ENCODE measurements at regions of chr12 and their contacts with region 1.

Region 1: DNA sequence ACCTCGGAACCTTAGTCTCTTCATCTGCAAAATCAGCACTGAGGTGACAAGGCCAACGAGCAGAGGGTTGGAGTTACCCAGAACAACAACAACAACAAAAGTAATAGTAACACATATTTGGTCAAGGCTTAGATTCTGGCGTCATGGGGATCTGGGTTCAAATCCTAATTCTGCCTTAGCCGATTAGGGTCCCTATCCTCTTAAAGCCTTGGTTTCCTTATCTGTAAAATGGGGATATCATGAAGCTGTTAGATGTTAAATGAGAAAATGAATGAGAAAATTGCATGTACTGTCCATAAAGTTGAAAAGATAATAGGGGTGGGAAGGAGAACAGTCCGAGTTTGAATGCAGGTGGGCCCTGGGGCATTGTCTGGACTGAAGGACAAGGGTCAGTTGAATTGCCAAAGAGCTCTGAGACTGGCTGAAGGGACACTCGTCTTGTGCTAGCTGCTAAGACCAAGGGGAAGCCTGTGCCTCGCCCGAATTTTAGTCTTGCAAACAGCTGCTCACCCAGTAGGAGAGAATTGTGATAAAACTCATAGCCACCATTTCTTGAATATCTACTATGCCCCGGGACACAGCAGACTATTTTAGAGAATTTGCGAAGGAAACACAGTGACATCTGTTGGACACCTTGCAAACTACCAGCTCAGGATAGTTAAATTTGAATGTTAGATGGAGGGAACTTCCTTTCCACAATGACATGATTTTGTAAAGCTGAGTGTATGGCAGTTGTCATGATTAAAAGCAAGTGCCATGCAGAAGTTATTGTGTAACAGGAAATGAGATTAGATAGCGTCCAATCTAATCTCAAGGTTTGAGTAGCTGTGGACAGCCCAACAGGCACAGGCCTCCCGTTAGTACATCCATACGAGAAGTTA is 6.8 kb upstream of the HNF1A start:
- DNase-seq: peak; percentile 43 to 72 (median 59)
- ATAC-seq: peak; percentile 92
- H3K4me3 ChIP-seq: no peak overlapping the region
- H3K27ac ChIP-seq: no peak overlapping the region
- H3K4me1 ChIP-seq: peaks cover 0 to 2% of the 10 kb centered on the region in 2 experiments; a peak in 1 of 5 replicates
- H3K27me3 ChIP-seq: no peaks in the 10 kb centered on the region
- CTCF ChIP-seq: peak; percentile 69 to 94 (median 85)
- EP300 ChIP-seq: no peak
- POLR2A ChIP-seq: no peak
- RAD21 ChIP-seq: peak; percentile 81 to 94

Region 2: DNA sequence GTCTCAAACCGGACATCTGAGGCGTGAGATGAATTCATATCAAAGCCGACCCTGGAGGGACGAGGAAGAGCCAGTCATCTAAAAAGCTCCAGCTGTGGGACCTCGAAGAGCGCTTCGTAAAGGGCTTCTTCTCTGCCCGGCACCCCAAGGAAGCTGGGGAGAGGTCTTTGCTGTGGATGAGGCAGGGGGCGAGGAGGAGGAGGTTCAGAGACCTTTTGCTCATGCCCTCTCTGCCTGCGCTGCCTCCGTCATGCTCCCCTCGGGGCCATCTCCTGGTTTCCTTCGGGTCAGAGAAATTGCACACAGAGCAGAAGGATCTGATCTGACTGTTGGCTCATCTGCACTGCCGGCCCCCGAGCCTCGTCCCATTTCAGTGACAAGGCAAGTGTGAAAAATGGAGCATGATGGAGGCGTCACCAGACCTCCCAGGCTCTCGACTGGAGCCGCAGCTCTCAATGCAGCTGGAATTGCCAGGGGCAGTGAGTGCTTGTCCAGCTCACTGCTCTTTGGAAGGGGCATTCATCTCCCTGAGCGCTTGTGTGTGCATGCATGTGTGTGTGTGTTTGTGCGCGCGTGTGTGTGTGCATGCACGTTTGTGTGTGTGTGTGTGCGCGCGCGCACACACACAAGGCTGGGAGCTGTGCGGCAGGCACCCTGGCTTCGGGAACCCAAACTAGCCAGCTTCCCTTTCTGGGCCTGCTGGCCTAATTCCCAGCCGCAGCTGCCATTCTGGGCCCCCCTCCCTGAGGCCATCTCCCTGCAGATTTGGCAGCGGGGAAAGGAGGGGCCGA is 321.9 kb before region 1 on chr12:
- CTCF ChIA-PET with region 1: interaction called, 9 read pairs
- POLR2A ChIA-PET with region 1: interaction called, 3 read pairs
- in situ Hi-C with region 1: no loop called
- intact Hi-C with region 1: loop called (anchors 5 kb)
- DNase-seq: no peak
- ATAC-seq: 0 out of 3 replicates have a peak, but pooled peaks have one; percentile 10
- H3K4me3 ChIP-seq: no peak overlapping the region
- H3K27ac ChIP-seq: no peak overlapping the region
- H3K4me1 ChIP-seq: peaks cover 3 to 6% of the 10 kb centered on the region in 2 experiments; a peak in 2 of 5 replicates
- H3K27me3 ChIP-seq: peaks cover 29 to 54% of the 10 kb centered on the region in 2 experiments
- CTCF ChIP-seq: peak in 1 of 3 experiments; percentile 9; a peak in 1 of 6 replicates
- EP300 ChIP-seq: no peak
- POLR2A ChIP-seq: no peak
- RAD21 ChIP-seq: no peak

Region 3: DNA sequence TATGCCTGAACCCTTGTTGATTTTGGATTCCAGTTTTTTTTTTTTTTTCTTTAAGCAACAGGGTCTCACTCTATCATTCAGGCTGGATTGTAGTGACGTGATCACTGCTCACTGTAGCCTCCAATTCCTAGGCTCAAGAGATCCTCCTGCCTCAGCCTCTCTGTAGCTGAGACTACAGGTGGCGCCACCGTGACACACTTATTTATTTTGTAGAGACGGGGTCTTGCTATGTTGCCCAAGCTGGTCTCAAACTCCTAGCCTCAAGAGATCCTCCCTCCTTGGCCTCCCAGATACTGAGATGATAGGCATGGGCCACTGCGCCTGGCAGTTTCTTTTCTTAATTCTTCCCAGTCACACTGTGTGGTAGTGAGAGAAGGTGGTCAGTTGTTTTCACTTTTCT is 220.7 kb before region 1 on chr12:
- CTCF ChIA-PET with region 1: no interaction called
- POLR2A ChIA-PET with region 1: no interaction called
- in situ Hi-C with region 1: no loop called
- intact Hi-C with region 1: loop called (anchors 2 kb)
- DNase-seq: peak in 1 of 4 experiments; percentile 17
- ATAC-seq: no peak
- H3K4me3 ChIP-seq: no peak overlapping the region
- H3K27ac ChIP-seq: no peak overlapping the region
- H3K4me1 ChIP-seq: peaks cover 3 to 5% of the 10 kb centered on the region in 2 experiments; a peak in 2 of 5 replicates
- H3K27me3 ChIP-seq: no peaks in the 10 kb centered on the region
- CTCF ChIP-seq: peak in 1 of 3 experiments; percentile 21; a peak in 2 of 6 replicates
- EP300 ChIP-seq: no peak
- POLR2A ChIP-seq: no peak
- RAD21 ChIP-seq: peak in 1 of 2 experiments; percentile 39; a peak in 2 of 4 replicates

Region 4: DNA sequence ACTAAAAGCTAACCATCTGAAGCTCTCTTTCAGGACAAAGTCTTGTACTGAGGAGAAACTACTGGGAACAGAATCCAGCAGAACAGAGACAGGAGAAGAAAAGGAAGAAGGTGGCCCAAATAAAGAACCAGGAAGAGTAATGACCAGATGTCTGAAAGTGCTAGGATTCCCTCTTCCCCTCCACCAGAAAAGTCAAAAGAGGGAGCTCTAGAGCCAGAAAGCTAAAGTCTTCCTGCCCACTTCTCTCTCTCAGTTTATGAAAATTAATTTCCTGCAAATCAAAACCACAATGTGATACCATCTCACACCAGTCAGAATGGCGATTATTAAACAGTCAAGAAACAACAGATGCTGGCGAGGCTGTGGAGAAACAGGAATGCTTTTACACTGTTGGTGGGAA is 114.6 kb before region 1 on chr12:
- CTCF ChIA-PET with region 1: interaction called, 4 read pairs
- POLR2A ChIA-PET with region 1: no interaction called
- in situ Hi-C with region 1: no loop called
- intact Hi-C with region 1: loop called (anchors 2 kb)
- DNase-seq: peak in 1 of 4 experiments; percentile 23
- ATAC-seq: peak; percentile 70
- H3K4me3 ChIP-seq: no peak overlapping the region
- H3K27ac ChIP-seq: no peak overlapping the region
- H3K4me1 ChIP-seq: peaks cover 4 to 11% of the 10 kb centered on the region in 2 experiments; a peak in 2 of 5 replicates
- H3K27me3 ChIP-seq: no peaks in the 10 kb centered on the region
- CTCF ChIP-seq: peak; percentile 23 to 61 (median 35); a peak in 3 of 6 replicates
- EP300 ChIP-seq: no peak
- POLR2A ChIP-seq: no peak
- RAD21 ChIP-seq: peak in 1 of 2 experiments; percentile 62; a peak in 2 of 4 replicates

Region 5: GRCh38 chr12:120904197-120904773 is 67.3 kb before region 1 on chr12 and contains the start of gene SPPL3:
- CTCF ChIA-PET with region 1: no interaction called
- POLR2A ChIA-PET with region 1: no interaction called
- in situ Hi-C with region 1: no loop called
- intact Hi-C with region 1: loop called (anchors 1 kb)
- DNase-seq: peak; percentile 94 to 95 (median 95)
- ATAC-seq: peak; percentile 91
- H3K4me3 ChIP-seq: peak within 1 kb of the TSS; percentile 98
- H3K27ac ChIP-seq: peak within 1 kb of the TSS; percentile 84
- H3K4me1 ChIP-seq: peaks cover 13 to 21% of the 10 kb centered on the region in 2 experiments; a peak in 4 of 5 replicates
- H3K27me3 ChIP-seq: no peaks in the 10 kb centered on the region
- CTCF ChIP-seq: peak in 2 of 3 experiments; percentile 17 to 26; a peak in 1 of 6 replicates
- EP300 ChIP-seq: no peak
- POLR2A ChIP-seq: peak; percentile 80
- RAD21 ChIP-seq: no peak; a peak in 1 of 4 replicates
- polyA plus RNA-seq, gene SPPL3: 3.8 to 5.3 TPM

Measured in K562 (cell line).